Left ventricle myocardium superior (tissue), 1 donor: ENCODE measurements at regions of chr13 and their contacts with region 1.

Region 1: GRCh38 chr13:87582399-87582798 is 88.8 kb upstream of the SLITRK5 start:
- DNase-seq: no peak
- ATAC-seq: no peak

Region 2: GRCh38 chr13:87535911-87536310 is 46.5 kb before region 1 on chr13:
- intact Hi-C with region 1: loop called (anchors 2 kb)
- DNase-seq: no peak
- ATAC-seq: no peak